ENCODE measurements at regions of chr9 and their contacts with region 1.

Region 1: DNA sequence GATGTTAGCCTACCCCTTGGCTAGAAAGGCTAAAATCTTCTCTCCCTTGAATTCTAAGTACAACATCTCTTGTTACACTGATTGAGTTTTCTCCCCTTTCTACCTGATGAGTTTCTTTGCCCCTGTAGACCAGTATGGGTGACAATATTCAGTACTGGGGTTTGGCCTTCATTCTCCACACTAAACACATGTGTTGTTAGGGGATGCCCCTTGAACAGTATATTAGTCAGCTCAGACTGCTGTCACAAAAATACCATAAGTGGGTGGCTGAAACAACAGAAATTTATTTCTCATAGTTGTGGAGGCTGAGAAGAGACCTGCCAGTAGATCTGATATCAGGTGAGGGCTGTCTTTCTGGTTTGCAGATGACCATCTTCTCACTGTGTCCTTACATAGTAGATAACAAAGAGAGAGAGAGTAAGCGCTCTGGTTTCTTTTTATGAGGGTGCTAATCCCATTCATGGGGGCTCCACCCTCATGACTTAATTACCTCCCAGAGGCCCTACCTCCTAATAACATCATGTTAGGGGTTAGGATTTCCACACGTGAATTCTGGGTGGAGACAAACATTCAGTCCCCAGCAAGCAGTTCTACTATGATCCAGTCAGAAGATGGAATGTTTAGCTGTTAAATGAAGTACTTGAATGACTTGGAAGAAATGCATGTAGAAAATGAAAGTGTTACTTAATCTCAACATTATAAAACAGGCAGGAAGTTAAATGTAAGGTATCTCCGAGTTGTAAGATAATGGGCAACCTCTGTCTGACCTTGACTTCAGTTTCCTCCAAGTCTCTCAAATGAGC is 17.5 kb downstream of the VLDLR start:
- DNase-seq: no peak
- H3K4me3 Mint-ChIP-seq: no peak overlapping the region
- H3K27ac Mint-ChIP-seq: peak overlapping the region; percentile 69
- H3K4me1 Mint-ChIP-seq: peaks cover 35% of the 10 kb centered on the region
- H3K27me3 Mint-ChIP-seq: no peaks in the 10 kb centered on the region

Region 2: DNA sequence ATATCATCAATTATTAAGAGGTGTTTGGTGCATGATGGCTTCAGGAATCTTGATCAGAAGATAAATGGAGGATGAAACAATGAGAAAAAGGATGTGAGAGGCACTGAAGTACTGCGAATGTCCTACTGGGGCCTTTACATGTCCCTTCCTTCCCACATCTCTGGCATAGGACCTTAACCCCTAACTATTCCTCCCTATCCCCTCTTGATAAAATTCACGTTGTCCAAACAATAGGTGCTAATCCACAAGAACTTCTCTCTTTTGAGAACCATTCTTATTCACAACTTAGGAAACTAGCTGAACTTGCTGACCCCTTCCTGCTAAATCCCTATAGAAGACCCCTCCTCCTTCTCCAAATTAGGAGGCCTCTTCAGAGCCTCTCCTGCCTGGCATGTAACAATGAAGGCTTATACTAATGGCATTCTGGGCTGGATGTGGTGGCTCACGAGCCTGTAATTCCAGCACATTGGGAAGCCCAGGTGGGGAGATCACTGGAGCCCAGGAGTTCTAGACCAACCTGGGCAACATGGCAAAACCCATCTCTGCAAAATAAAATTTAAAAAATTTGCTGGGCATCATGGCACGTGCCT is 900.5 kb before region 1 on chr9:
- intact Hi-C with region 1: no loop called
- DNase-seq: no peak
- H3K4me3 Mint-ChIP-seq: no peak overlapping the region
- H3K27ac Mint-ChIP-seq: no peak overlapping the region
- H3K4me1 Mint-ChIP-seq: no peaks in the 10 kb centered on the region
- H3K27me3 Mint-ChIP-seq: no peaks in the 10 kb centered on the region

Region 3: GRCh38 chr9:2620919-2621679 is 18.0 kb before region 1 on chr9:
- intact Hi-C with region 1: loop called (anchors 2 kb)
- DNase-seq: peak; percentile 47
- H3K4me3 Mint-ChIP-seq: peak overlapping the region; percentile 87
- H3K27ac Mint-ChIP-seq: peak overlapping the region; percentile 83
- H3K4me1 Mint-ChIP-seq: peaks cover 27% of the 10 kb centered on the region
- H3K27me3 Mint-ChIP-seq: peaks cover 30% of the 10 kb centered on the region

Measured in activated T-helper 2 cell treated with anti-CD3 and anti-CD28 coated beads, Interferon-gamma antibody, Interleukin-2, Interleukin-4, amounts not matched to agents 10 μg/mL and 5 μg/mL and 100 μg/mL, durations not matched to agents 14 hours and 24 hours and 36 hours (primary cell).